Head of caudate nucleus (tissue), 42 donors: ENCODE measurements at regions of chr1 and their contacts with region 1.

Region 1: DNA sequence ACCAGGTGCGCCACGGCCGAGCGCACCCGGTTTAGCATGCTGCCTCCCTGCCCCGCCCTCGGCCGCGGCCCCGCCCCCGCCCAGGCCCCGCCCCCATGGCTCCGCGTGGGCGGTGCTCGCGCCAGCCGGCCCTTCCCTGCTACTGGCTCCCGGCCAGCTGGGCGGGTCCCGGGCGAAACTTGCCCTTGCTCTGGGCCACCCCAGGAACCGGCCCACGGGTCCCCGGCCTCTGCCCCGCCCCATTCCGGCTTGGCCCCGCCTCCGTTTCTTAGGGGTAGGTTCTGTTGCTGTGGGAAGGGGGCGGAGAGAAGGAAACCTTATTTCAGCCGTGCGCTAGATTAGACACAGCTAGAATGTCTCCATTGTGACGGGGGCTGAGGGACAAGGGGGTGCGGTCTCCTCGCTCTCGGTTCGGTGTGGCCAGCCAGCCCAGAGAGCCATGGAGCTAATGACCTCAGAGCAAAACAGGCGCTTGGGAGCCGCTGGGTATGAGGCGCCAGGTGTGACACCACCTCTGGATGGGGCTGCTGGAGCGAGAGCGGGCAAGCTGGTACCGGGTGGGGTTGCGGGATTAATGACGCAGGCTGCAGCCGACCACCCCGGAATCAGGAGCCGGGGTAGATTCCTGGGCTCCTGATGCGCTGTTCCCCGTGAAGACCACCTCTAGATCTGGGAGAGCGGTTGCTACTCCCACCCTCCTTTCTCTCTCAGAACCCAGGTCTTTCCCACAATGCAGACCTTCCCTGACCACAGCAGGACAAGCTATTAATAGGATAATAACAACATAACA is at the start of gene PPM1J:
- DNase-seq: peak; percentile 68 to 94 (median 86)

Region 2: DNA sequence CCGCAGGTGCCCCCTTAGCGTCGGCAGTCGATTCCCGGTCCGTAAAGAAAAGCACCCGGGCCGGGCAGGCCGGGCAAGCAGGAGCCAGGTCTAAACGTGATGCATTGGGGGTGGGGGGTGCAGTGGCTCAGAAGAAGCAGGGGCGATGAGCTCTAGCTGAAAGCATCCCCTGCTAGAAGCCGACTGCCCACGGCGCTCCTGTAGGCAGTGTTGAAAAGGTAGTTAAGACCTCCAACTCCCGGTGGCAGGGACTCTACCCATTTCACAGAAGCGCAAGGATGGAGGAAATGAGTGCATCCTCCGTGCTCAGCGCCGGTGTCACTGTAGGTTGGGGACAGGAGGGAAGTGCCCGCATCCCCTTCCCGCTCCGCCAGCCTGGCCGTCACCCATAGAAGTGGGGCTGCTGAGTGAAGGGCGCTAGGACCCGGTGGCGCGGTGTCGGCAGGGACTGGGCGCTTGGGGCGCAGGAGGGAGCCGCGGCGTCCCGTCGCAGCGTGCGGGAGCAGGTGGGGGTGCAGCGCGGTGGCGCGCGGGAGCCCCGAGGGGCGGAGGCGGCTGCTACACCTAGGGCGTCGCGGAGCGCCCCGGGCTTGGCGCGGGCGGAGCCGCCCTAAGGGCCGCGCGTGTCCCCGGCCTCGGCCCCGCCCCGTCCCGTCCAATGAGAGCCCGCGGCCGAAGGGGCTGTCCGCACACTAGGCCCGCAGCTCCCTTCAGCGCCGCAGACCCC is 207.0 kb before region 1 on chr1 and contains the start of gene WNT2B:
- intact Hi-C with region 1: no loop called
- DNase-seq: peak; percentile 16 to 87 (median 70)

Region 3: GRCh38 chr1:112674439-112674985 is 40.9 kb before region 1 on chr1 and contains the start of gene MOV10:
- intact Hi-C with region 1: loop called (anchors 5 kb)
- DNase-seq: peak in 40 of 42 donors; percentile 17 to 82 (median 58)

Region 4: GRCh38 chr1:112882271-112882744 is 166.8 kb after region 1 on chr1:
- intact Hi-C with region 1: loop called (anchors 10 kb)
- DNase-seq: no peak

Region 5: DNA sequence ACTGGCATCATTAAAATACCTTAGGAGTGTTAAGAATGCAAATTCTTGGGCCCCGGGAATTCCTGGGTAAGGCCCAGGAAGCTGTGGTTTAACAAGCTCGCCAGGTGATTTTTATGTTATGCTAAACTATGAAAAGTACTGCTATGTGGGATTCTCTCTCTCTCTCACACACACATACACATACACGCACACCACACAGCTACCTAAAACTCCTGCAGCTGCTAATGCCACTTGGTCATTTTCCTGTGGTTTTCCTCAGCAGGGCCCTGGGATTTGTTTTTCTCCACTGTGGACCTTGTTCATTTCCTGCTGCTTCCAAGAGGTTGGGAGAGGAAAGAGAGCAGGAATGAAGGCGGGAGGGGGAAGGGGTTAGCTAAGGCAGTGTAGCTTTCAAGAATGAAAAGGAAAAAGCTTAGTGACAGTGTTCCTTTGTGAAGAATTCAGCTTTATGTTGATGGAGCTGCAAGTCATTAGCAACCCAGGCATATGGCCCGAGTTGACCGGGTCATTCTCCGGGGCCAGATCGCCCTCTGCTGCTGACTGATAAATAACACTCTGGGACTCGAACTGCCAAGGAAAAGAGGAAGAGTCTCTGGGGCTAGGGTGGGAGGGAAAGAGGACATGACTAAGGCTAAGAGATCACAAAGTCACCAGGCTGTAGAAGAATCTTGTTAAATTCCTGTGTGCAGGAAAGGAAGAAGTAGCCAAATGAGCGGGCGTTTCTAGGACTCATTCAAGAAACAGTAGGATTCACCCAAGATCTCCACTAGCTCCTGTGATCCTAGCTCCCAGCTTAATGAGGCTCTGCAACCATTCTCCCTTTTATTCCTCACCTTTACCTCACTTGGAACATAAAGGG is 327.1 kb after region 1 on chr1:
- intact Hi-C with region 1: loop called (anchors 10 kb)
- DNase-seq: peak; percentile 36 to 94 (median 83)